Endothelial cell of umbilical vein (primary cell): ENCODE measurements at regions of chr6 and their contacts with region 1.

Region 1: GRCh38 chr6:153032255-153032882 is 29.9 kb upstream of the MTRF1L start:
- DNase-seq: peak; percentile 66
- H3K4me3 ChIP-seq: no peak overlapping the region
- H3K27ac ChIP-seq: no peak overlapping the region
- H3K4me1 ChIP-seq: peaks cover 15% of the 10 kb centered on the region
- H3K27me3 ChIP-seq: no peaks in the 10 kb centered on the region
- CTCF ChIP-seq: peak in 1 of 2 donors; percentile 12
- POLR2A ChIP-seq: no peak

Region 2: GRCh38 chr6:153092082-153093013 is 60.0 kb after region 1 on chr6:
- CTCF ChIA-PET with region 1: interaction called, 22 read pairs
- POLR2A ChIA-PET with region 1: interaction called, 3 read pairs
- dilution Hi-C with region 1: no loop called
- intact Hi-C with region 1: loop called (anchors 5 kb)
- DNase-seq: peak; percentile 81
- H3K4me3 ChIP-seq: peak overlapping the region in 1 of 3 experiments; percentile 21
- H3K27ac ChIP-seq: peak overlapping the region; percentile 78
- H3K4me1 ChIP-seq: peaks cover 39% of the 10 kb centered on the region
- H3K27me3 ChIP-seq: no peaks in the 10 kb centered on the region
- CTCF ChIP-seq: no peak
- POLR2A ChIP-seq: no peak

Region 3: GRCh38 chr6:153167061-153167891 is 134.9 kb after region 1 on chr6:
- CTCF ChIA-PET with region 1: interaction called, 4 read pairs
- POLR2A ChIA-PET with region 1: no interaction called
- dilution Hi-C with region 1: no loop called
- intact Hi-C with region 1: loop called (anchors 1 kb)
- DNase-seq: peak; percentile 79
- H3K4me3 ChIP-seq: no peak overlapping the region
- H3K27ac ChIP-seq: peak overlapping the region; percentile 75
- H3K4me1 ChIP-seq: peaks cover 19% of the 10 kb centered on the region
- H3K27me3 ChIP-seq: no peaks in the 10 kb centered on the region
- CTCF ChIP-seq: no peak
- POLR2A ChIP-seq: no peak

Region 4: GRCh38 chr6:153231048-153231646 is 198.8 kb after region 1 on chr6:
- CTCF ChIA-PET with region 1: interaction called, 18 read pairs
- POLR2A ChIA-PET with region 1: no interaction called
- dilution Hi-C with region 1: no loop called
- intact Hi-C with region 1: loop called (anchors 1 kb)
- DNase-seq: peak; percentile 33
- H3K4me3 ChIP-seq: no peak overlapping the region
- H3K27ac ChIP-seq: no peak overlapping the region
- H3K4me1 ChIP-seq: no peaks in the 10 kb centered on the region
- H3K27me3 ChIP-seq: peaks cover 0 to 3% of the 10 kb centered on the region in 2 experiments
- CTCF ChIP-seq: peak; percentile 74 to 92
- POLR2A ChIP-seq: no peak

Region 5: GRCh38 chr6:153511896-153512496 is 479.6 kb after region 1 on chr6:
- CTCF ChIA-PET with region 1: interaction called, 31 read pairs
- POLR2A ChIA-PET with region 1: no interaction called
- dilution Hi-C with region 1: no loop called
- intact Hi-C with region 1: loop called (anchors 1 kb)
- DNase-seq: peak; percentile 7
- H3K4me3 ChIP-seq: no peak overlapping the region
- H3K27ac ChIP-seq: no peak overlapping the region
- H3K4me1 ChIP-seq: no peaks in the 10 kb centered on the region
- H3K27me3 ChIP-seq: no peaks in the 10 kb centered on the region
- CTCF ChIP-seq: peak; percentile 32 to 43
- POLR2A ChIP-seq: no peak